ENCODE measurements at regions of chr5 and their contacts with region 1.

Region 1: DNA sequence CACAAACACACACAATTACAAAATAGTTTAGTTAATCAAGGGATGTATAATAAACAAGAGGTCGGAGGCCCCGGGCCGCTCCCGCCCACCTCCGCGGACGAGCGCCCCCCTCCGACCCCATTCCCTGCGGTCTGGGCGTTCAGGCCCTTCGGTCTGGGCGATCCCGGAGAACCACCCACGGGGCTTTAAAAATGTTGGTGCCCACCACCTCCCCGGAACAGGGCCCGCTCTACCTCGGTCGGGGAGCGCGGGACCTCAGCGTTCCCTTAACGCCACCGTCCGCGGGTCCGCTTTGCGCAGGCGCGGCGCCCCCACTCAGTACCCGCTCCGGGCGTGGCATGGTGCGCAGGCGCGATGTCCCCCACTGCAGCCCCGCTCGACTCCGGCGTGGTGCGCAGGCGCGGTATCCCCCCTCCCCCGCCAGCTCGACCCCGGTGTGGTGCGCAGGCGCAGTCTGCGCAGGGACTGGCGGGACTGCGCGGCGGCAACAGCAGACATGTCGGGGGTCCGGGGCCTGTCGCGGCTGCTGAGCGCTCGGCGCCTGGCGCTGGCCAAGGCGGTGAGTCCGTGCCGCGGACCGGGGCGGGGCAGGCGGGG is at the starts of genes CCDC127 and SDHA:
- DNase-seq: peak; percentile 88 to 98 (median 92)

Region 2: GRCh38 chr5:270340-270739 is 52.4 kb after region 1 on chr5:
- intact Hi-C with region 1: loop called (anchors 1 kb)
- DNase-seq: no peak

Measured in posterior cingulate gyrus (tissue), 11 donors.